ENCODE measurements at regions of chr16 and their contacts with region 1.

Region 1: DNA sequence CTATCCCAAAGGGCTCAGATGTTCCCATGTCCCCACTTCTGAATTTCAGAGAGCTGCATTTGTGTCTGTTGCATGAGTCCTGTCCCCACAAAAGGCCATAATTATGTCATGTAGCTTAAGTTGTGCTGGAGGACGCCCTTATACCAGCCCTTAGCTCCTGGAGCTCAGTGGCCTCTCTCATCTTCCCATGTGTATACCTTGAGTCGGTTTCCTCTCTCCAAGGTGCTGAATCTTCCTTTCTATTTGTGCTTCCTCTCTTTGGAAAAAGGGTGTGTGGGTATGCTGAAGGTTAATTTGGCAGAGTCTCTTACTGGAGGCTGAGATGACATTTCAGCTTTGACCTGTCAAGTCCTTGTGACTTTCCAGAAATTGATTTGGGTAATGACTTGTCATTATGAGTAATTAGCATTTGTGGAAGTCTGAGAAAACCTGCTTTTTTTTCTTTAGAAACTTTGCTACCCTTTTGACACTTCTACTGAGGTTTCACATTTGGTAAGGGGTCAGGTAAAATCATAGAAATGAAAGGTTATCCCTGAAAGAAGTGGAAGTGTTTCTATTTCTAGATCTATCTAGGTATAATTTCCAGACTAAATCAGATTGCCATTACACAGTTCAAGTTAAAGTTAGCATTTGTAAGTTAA is 185.4 kb downstream of the ABCC12 start:
- DNase-seq: peak; percentile 65
- ATAC-seq: peak; percentile 29; the same call in 1 of the 2 replicates
- H3K4me3 ChIP-seq: no peak overlapping the region
- H3K27ac ChIP-seq: no peak overlapping the region
- H3K4me1 ChIP-seq: no peaks in the 10 kb centered on the region
- H3K27me3 ChIP-seq: no peaks in the 10 kb centered on the region
- CTCF ChIP-seq: no peak

Region 2: GRCh38 chr16:47905771-47906170 is 64.6 kb before region 1 on chr16:
- CTCF ChIA-PET with region 1: no interaction called
- POLR2A ChIA-PET with region 1: no interaction called
- intact Hi-C with region 1: no loop called
- DNase-seq: peak; percentile 79
- ATAC-seq: peak; percentile 31; the same call in 1 of the 2 replicates
- H3K4me3 ChIP-seq: no peak overlapping the region
- H3K27ac ChIP-seq: 0 out of 2 replicates have a peak overlapping the region, but pooled peaks have one; percentile 11
- H3K4me1 ChIP-seq: peaks cover 20% of the 10 kb centered on the region
- H3K27me3 ChIP-seq: no peaks in the 10 kb centered on the region
- CTCF ChIP-seq: no peak

Region 3: DNA sequence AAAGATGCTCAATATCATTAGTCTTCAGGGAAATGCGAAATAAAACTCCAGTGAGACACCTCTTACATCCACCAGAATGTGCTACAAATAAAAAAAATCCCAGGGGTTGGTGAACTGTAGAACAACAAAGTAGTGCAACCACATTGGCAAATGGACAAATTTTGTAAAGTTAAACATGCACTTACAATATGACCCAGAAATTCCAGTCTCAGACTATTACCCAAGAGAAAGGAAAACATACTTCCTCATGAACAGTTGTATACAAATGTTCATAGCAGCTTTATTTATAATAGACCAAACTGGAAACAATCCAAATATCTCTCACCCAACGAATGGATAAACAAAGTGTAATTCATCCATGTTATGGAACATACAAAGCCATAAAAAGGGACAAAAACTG is 54.1 kb before region 1 on chr16:
- CTCF ChIA-PET with region 1: no interaction called
- POLR2A ChIA-PET with region 1: no interaction called
- intact Hi-C with region 1: no loop called
- DNase-seq: peak; percentile 13
- ATAC-seq: no peak
- H3K4me3 ChIP-seq: no peak overlapping the region
- H3K27ac ChIP-seq: no peak overlapping the region
- H3K4me1 ChIP-seq: peaks cover 12% of the 10 kb centered on the region
- H3K27me3 ChIP-seq: no peaks in the 10 kb centered on the region
- CTCF ChIP-seq: no peak

Region 4: DNA sequence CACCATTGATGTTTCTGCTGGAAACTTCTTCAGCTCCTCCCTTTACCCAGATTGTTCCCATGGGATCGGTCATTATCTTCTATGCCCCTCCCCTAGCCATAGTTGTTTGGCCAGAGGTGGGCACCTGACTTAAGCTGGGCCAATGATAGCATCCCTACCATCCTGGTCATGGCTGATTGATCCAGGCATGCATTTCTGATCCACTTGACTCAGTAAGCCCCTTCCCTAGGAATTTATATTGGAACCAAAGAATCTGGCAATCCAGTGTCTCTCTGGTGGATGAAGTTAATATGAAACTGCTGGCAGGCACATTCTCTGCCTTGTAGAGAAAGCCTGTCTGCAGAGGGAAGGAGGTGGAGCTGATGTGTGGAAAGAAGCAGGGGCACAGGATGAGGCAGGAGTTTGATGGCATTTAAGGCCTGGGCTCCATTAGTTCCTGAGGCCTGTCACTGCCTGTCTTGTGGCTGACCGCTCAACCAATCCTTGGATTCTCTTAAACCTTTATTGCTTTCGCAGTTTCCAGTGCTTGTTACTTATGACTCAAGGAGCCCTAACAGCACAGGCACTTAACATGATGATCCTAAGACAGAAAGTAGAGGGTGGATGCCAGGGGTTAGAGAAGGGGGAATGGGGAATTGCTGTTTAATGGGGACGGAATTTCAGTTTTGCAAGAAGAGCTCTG is 33.0 kb after region 1 on chr16:
- CTCF ChIA-PET with region 1: no interaction called
- POLR2A ChIA-PET with region 1: interaction called, 42 read pairs
- intact Hi-C with region 1: no loop called
- DNase-seq: no peak
- ATAC-seq: no peak
- H3K4me3 ChIP-seq: no peak overlapping the region
- H3K27ac ChIP-seq: no peak overlapping the region
- H3K4me1 ChIP-seq: no peaks in the 10 kb centered on the region
- H3K27me3 ChIP-seq: no peaks in the 10 kb centered on the region
- CTCF ChIP-seq: no peak